ENCODE measurements at regions of chr17 and their contacts with region 1.

Region 1: DNA sequence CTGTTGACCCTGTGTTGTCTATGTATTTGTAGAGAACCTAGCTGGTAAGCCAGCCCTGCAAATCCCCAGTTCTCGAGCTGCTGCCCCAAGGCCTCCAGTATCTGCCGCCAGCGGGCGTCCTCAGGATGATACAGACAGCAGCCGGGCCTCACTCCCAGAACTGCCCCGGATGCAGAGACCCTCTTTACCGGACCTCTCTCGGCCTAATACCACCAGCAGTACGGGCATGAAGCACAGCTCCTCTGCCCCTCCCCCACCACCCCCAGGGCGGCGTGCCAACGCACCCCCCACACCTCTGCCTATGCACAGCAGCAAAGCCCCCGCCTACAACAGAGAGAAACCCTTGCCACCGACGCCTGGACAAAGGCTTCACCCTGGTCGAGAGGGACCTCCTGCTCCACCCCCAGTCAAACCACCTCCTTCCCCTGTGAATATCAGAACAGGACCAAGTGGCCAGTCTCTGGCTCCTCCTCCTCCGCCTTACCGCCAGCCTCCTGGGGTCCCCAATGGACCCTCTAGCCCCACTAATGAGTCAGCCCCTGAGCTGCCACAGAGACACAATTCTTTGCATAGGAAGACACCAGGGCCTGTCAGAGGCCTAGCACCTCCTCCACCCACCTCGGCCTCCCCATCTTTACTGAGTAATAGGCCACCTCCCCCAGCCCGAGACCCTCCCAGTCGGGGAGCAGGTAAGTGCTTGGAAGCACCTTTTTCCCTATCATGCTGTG is 23.1 kb upstream of the CDC6 start:
- DNase-seq: no peak
- ATAC-seq: no peak
- H3K4me3 ChIP-seq: no peak overlapping the region
- H3K4me3 Mint-ChIP-seq: no peak overlapping the region
- H3K27ac ChIP-seq: no peak overlapping the region
- H3K27ac Mint-ChIP-seq: no peak overlapping the region
- H3K4me1 ChIP-seq: no peaks in the 10 kb centered on the region
- H3K4me1 Mint-ChIP-seq: no peaks in the 10 kb centered on the region
- H3K27me3 ChIP-seq: no peaks in the 10 kb centered on the region
- H3K27me3 Mint-ChIP-seq: no peaks in the 10 kb centered on the region

Region 2: GRCh38 chr17:39894681-39895376 is 369.8 kb before region 1 on chr17:
- CTCF ChIA-PET with region 1: no interaction called
- POLR2A ChIA-PET with region 1: interaction called in 1 of 2 experiments, 14 read pairs
- DNase-seq: no peak
- ATAC-seq: no peak
- H3K4me3 ChIP-seq: no peak overlapping the region
- H3K4me3 Mint-ChIP-seq: no peak overlapping the region
- H3K27ac ChIP-seq: no peak overlapping the region
- H3K27ac Mint-ChIP-seq: peak overlapping the region; percentile 74 to 81
- H3K4me1 ChIP-seq: no peaks in the 10 kb centered on the region
- H3K4me1 Mint-ChIP-seq: peaks cover 5 to 9% (median 7%) of the 10 kb centered on the region in 3 donors
- H3K27me3 ChIP-seq: peaks cover 0 to 2% of the 10 kb centered on the region in 2 experiments
- H3K27me3 Mint-ChIP-seq: no peaks in the 10 kb centered on the region

Region 3: GRCh38 chr17:40524235-40524965 is 259.8 kb after region 1 on chr17:
- CTCF ChIA-PET with region 1: no interaction called
- POLR2A ChIA-PET with region 1: interaction called in 1 of 2 experiments, 18 read pairs
- DNase-seq: no peak
- ATAC-seq: no peak
- H3K4me3 ChIP-seq: no peak overlapping the region
- H3K4me3 Mint-ChIP-seq: no peak overlapping the region
- H3K27ac ChIP-seq: no peak overlapping the region
- H3K27ac Mint-ChIP-seq: no peak overlapping the region
- H3K4me1 ChIP-seq: peaks cover 21 to 40% of the 10 kb centered on the region in 2 experiments
- H3K4me1 Mint-ChIP-seq: peaks cover 24 to 47% (median 24%) of the 10 kb centered on the region in 3 donors
- H3K27me3 ChIP-seq: peaks cover 0 to 2% of the 10 kb centered on the region in 2 experiments
- H3K27me3 Mint-ChIP-seq: no peaks in the 10 kb centered on the region

Measured in T-cell (primary cell).